ENCODE measurements at regions of chr19 and their contacts with region 1.

Region 1: GRCh38 chr19:55632463-55632834 is 8.1 kb upstream of the ZNF784 start:
- DNase-seq: peak; percentile 44
- ATAC-seq: peak; percentile 57
- H3K4me3 Mint-ChIP-seq: peak overlapping the region; percentile 60
- H3K27ac Mint-ChIP-seq: peak overlapping the region; percentile 37
- H3K4me1 Mint-ChIP-seq: peaks cover 40% of the 10 kb centered on the region
- H3K27me3 Mint-ChIP-seq: no peaks in the 10 kb centered on the region
- CTCF ChIP-seq: no peak

Region 2: DNA sequence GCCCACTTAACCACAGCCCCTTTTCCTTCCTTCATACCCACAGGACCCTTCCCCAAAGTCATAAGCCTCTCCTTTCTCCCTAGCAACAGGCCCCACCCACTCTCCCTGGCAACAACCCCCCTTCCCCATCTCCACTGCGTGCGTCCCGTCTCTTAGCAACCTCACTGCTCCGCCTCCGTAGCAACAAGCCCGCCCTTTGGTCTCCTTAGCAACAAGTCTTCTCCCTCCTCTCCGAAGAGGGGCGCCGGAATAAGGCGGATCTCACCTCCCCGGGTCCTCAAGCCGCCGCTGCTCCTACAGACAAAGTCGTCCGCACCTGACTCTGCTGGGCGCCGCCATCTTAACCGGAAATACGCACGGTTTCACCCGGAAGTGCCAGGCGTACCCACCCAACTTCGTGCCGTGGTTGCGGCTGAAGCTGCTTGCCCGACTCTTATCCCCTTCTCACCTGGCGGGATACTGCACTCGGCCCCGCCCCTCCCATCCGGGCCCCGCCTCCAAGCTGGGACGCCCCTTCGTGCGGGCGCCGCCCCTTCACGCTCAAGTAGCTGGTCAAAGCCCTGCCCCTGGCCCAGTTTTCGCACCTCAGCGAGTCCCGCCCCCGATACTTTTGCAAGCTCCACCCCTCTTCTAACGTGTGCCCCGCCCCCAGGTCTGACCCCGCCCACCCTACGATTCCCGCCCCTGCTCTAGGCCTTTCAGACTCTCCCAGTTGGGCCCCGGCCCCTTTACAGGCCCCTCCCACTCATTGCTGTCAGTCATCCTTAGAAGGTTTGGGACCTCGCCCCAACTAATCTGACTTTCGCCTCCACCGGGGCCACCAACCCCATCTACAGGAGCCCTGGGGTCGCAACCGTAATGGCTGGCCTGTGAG is 352.4 kb before region 1 on chr19 and contains the start of gene HSPBP1:
- CTCF ChIA-PET with region 1: no interaction called
- POLR2A ChIA-PET with region 1: interaction called, 18 read pairs
- intact Hi-C with region 1: no loop called
- DNase-seq: peak; percentile 97
- ATAC-seq: peak; percentile 83
- H3K4me3 Mint-ChIP-seq: peak within 1 kb of the TSS; percentile 100
- H3K27ac Mint-ChIP-seq: peak within 1 kb of the TSS; percentile 98
- H3K4me1 Mint-ChIP-seq: peaks cover 73% of the 10 kb centered on the region
- H3K27me3 Mint-ChIP-seq: peaks cover 4% of the 10 kb centered on the region
- CTCF ChIP-seq: no peak
- total RNA-seq, gene HSPBP1: 32.2 and 32.9 TPM in 2 replicates

Region 3: GRCh38 chr19:55503502-55504251 is 128.8 kb before region 1 on chr19:
- CTCF ChIA-PET with region 1: interaction called, 19 read pairs
- POLR2A ChIA-PET with region 1: interaction called, 7 read pairs
- intact Hi-C with region 1: no loop called
- DNase-seq: peak; percentile 97
- ATAC-seq: peak; percentile 95
- H3K4me3 Mint-ChIP-seq: peak overlapping the region; percentile 88
- H3K27ac Mint-ChIP-seq: peak overlapping the region; percentile 91
- H3K4me1 Mint-ChIP-seq: peaks cover 11% of the 10 kb centered on the region
- H3K27me3 Mint-ChIP-seq: peaks cover 3% of the 10 kb centered on the region
- CTCF ChIP-seq: peak; percentile 79

Region 4: DNA sequence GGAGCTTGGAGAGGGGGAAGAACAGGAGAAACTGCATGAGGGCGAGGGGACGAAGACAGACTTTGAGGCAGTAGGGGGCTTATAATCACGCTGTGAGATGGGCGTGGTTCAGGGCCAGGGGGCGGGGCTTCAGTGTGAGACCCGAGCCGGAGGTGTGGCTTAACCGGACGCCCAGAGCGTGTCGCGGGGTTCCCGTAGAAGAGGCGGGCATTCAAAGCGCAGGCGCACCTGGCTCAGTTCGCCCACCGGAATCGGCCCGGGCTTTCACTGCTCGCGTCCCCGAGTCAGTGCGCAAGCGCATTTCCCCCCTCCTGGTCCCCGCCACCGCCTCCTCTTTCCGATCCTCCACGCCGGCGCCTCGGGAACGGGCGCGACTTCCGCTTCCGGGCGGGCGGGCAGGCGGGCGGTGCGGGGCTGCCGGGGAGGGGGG is 27.2 kb before region 1 on chr19:
- CTCF ChIA-PET with region 1: interaction called, 38 read pairs
- POLR2A ChIA-PET with region 1: interaction called, 18 read pairs
- intact Hi-C with region 1: no loop called
- DNase-seq: peak; percentile 94
- ATAC-seq: peak; percentile 76
- H3K4me3 Mint-ChIP-seq: peak overlapping the region; percentile 93
- H3K27ac Mint-ChIP-seq: peak overlapping the region; percentile 94
- H3K4me1 Mint-ChIP-seq: peaks cover 50% of the 10 kb centered on the region
- H3K27me3 Mint-ChIP-seq: no peaks in the 10 kb centered on the region
- CTCF ChIP-seq: no peak

Region 5: DNA sequence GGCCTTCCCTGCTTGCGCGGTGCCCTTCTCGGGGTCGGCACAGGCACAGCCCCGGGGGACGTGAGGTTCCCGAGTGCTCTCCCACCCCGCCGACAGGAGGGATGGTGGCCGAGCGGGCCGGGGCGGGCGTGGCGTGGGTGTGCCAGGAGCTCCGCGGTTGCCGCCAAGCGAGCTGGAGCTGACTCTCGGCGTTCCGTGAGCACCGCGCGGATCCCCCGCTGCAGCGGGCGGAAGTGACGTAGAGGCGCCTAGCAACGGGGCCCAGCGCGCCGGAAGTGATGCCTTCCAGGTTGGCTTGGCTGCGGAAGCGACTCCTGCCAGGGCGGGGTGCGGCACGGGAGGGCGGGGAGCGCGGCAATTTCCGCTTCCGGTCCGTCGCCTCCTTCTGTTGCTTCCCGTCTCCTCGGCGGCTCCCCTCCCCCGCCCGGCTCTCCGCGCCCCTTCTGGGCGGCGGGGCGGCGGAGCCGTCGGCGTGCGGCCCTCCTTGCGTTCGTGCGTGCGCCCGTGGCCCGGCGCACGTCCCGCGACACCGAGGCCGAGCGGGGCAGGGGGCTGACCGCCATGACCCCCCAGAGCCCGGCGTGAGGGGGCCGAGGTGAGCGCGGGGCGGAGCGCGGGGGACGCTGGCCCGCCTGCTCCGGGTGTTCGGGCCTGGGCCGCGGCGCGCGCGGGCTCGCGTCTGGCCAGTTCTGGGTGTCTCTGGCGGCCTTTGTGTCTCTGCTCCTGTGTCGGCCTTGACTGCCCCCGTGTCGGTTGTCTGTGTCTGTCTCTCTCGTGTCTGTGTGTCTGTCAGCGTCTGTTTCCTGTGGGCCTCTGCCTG is 42.6 kb after region 1 on chr19 and contains the start of gene EPN1:
- CTCF ChIA-PET with region 1: interaction called, 21 read pairs
- POLR2A ChIA-PET with region 1: interaction called, 4 read pairs
- intact Hi-C with region 1: loop called (anchors 2 kb)
- DNase-seq: peak; percentile 93
- ATAC-seq: peak; percentile 65
- H3K4me3 Mint-ChIP-seq: peak within 1 kb of the TSS; percentile 89
- H3K27ac Mint-ChIP-seq: peak within 1 kb of the TSS; percentile 83
- H3K4me1 Mint-ChIP-seq: peaks cover 69% of the 10 kb centered on the region
- H3K27me3 Mint-ChIP-seq: no peaks in the 10 kb centered on the region
- CTCF ChIP-seq: no peak
- total RNA-seq, gene EPN1: 56.6 and 65.2 TPM in 2 replicates